Posterior cingulate gyrus (tissue), 11 donors: ENCODE measurements at regions of chr1 and their contacts with region 1.

Region 1: GRCh38 chr1:207751790-207752455 is at the start of gene CD46:
- DNase-seq: peak; percentile 88 to 99 (median 93)

Region 2: DNA sequence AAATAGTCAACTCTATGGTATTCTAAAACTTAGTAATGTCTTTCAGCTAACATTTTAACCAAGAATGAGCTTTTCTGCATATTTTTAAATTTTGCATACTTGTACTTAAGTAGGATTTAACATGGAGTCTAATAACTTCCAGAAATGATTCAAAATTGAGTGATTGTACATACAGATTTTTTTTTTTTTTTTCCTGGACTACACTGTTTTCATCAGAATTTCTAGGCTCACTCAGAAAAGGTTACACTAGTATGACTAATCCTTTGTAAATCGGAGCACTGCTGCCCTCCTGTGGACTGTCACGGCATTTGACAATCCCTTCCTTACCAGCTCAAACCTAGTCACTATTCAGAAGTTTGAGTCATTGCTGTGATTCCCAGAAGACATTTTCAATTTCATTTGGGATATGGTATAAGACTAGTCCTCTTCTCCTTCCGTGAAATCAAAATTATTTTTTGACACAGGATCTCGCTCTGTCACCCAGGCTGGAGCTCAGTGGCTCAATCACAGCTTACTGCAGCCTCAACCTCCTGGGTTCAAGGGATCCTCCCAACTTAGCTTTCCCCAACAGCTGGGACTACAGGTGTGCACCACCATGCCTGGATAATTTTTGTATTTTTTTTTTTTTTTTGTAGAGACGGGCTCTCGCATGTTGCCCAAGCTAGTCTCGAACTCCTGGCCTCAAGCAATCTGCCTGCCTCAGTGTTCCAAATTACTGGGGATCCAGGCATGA is 45.5 kb after region 1 on chr1:
- intact Hi-C with region 1: loop called (anchors 5 kb)
- DNase-seq: peak in 9 of 10 donors; percentile 63 to 96 (median 86)